ENCODE measurements at regions of chr1 and their contacts with region 1.

Region 1: GRCh38 chr1:39738622-39739366 is at the start of gene PPIE:
- DNase-seq: peak; percentile 87 to 97 (median 95)
- ATAC-seq: peak; percentile 98
- H3K4me3 ChIP-seq: peak within 1 kb of the TSS; percentile 76 to 91
- H3K4me3 Mint-ChIP-seq: peak within 1 kb of the TSS; percentile 97
- H3K27ac ChIP-seq: peak within 1 kb of the TSS; percentile 83 to 87
- H3K27ac Mint-ChIP-seq: peak within 1 kb of the TSS; percentile 96
- H3K4me1 ChIP-seq: peaks cover 23% of the 10 kb centered on the region
- H3K4me1 Mint-ChIP-seq: peaks cover 40% of the 10 kb centered on the region
- H3K27me3 ChIP-seq: peaks cover 0 to 10% of the 10 kb centered on the region in 2 experiments
- H3K27me3 Mint-ChIP-seq: peaks cover 24% of the 10 kb centered on the region
- CTCF ChIP-seq: no peak
- total RNA-seq, gene PPIE: 43.6 to 46.7 TPM

Region 2: GRCh38 chr1:39691262-39692151 is 47.3 kb before region 1 on chr1 and contains the start of gene HPCAL4:
- CTCF ChIA-PET with region 1: no interaction called
- POLR2A ChIA-PET with region 1: interaction called, 8 read pairs
- intact Hi-C with region 1: loop called (anchors 1 kb)
- DNase-seq: peak; percentile 77 to 94 (median 89)
- ATAC-seq: peak; percentile 85
- H3K4me3 ChIP-seq: peak within 1 kb of the TSS; percentile 53 to 82
- H3K4me3 Mint-ChIP-seq: peak within 1 kb of the TSS; percentile 86
- H3K27ac ChIP-seq: peak within 1 kb of the TSS; percentile 40 to 86
- H3K27ac Mint-ChIP-seq: peak within 1 kb of the TSS; percentile 82
- H3K4me1 ChIP-seq: peaks cover 28% of the 10 kb centered on the region
- H3K4me1 Mint-ChIP-seq: peaks cover 34% of the 10 kb centered on the region
- H3K27me3 ChIP-seq: peaks cover 0 to 19% of the 10 kb centered on the region in 2 experiments
- H3K27me3 Mint-ChIP-seq: peaks cover 15% of the 10 kb centered on the region
- CTCF ChIP-seq: no peak
- total RNA-seq, gene HPCAL4: 12.1 to 12.8 TPM

Measured in CD8-positive, alpha-beta T cell (primary cell).